T-cell (primary cell): ENCODE measurements at regions of chr19 and their contacts with region 1.

Region 1: DNA sequence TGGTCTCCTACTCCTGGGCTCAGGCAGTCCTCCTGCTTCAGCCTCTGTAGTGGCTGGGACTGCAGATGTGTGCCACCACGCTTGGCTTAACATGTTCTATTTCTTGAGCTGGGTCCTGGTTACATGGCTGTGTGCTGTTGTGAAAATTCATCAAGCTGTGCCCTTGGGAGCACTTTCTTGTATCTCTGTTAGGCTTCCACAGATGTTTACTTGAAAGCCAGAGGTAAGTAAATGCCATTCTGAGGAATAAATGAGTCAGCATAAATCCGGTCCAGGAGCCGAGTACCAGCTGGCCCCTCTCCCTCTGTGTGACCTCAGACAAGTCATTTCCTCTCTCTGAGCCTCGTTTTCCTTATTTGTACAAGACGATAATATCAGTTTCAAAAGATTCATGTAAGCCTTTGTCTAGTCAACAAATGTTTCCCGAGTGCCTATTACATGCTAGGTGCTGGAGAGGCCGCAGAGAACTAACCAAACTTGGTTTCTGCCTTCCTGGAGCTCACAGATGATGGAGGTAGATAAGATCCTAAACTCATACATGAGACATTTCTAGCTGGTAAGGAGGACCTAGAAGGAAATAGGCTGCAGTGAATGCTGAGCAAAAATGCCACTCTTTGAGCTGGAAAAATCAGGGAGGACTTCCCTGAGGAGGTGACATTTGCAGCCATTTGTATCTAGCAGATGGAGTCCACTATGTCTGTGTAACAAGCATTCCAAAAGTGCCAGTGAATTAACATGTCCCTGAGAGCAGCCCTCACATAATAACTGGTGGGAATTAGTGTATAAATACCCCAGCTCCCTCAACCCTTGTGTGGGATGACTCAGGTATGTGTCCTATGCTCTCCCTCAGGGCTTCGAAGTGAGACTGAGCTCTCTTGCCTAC is 2.7 kb upstream of the RASAL3 start:
- DNase-seq: peak in 15 of 35 experiments; percentile 10 to 69 (median 26)
- ATAC-seq: peak; percentile 24 to 47 (median 38)
- H3K4me3 ChIP-seq: no peak overlapping the region
- H3K4me3 Mint-ChIP-seq: peak overlapping the region; percentile 60 to 89 (median 69)
- H3K27ac ChIP-seq: peak overlapping the region; percentile 76
- H3K27ac Mint-ChIP-seq: peak overlapping the region; percentile 87 to 96
- H3K4me1 ChIP-seq: peaks cover 23 to 73% of the 10 kb centered on the region in 2 experiments
- H3K4me1 Mint-ChIP-seq: peaks cover 62 to 68% (median 64%) of the 10 kb centered on the region in 3 donors
- H3K27me3 ChIP-seq: no peaks in the 10 kb centered on the region
- H3K27me3 Mint-ChIP-seq: peaks cover 0 to 3% of the 10 kb centered on the region in 2 donors

Region 2: GRCh38 chr19:15453091-15453578 is 14.0 kb before region 1 on chr19:
- CTCF ChIA-PET with region 1: interaction called, 3 read pairs
- POLR2A ChIA-PET with region 1: interaction called in 1 of 2 experiments, 10 read pairs
- DNase-seq: no peak
- ATAC-seq: no peak
- H3K4me3 ChIP-seq: no peak overlapping the region
- H3K4me3 Mint-ChIP-seq: no peak overlapping the region
- H3K27ac ChIP-seq: no peak overlapping the region
- H3K27ac Mint-ChIP-seq: no peak overlapping the region
- H3K4me1 ChIP-seq: peaks cover 0 to 54% of the 10 kb centered on the region in 2 experiments
- H3K4me1 Mint-ChIP-seq: peaks cover 33 to 43% (median 38%) of the 10 kb centered on the region in 3 donors
- H3K27me3 ChIP-seq: peaks cover 0 to 2% of the 10 kb centered on the region in 2 experiments
- H3K27me3 Mint-ChIP-seq: no peaks in the 10 kb centered on the region

Region 3: DNA sequence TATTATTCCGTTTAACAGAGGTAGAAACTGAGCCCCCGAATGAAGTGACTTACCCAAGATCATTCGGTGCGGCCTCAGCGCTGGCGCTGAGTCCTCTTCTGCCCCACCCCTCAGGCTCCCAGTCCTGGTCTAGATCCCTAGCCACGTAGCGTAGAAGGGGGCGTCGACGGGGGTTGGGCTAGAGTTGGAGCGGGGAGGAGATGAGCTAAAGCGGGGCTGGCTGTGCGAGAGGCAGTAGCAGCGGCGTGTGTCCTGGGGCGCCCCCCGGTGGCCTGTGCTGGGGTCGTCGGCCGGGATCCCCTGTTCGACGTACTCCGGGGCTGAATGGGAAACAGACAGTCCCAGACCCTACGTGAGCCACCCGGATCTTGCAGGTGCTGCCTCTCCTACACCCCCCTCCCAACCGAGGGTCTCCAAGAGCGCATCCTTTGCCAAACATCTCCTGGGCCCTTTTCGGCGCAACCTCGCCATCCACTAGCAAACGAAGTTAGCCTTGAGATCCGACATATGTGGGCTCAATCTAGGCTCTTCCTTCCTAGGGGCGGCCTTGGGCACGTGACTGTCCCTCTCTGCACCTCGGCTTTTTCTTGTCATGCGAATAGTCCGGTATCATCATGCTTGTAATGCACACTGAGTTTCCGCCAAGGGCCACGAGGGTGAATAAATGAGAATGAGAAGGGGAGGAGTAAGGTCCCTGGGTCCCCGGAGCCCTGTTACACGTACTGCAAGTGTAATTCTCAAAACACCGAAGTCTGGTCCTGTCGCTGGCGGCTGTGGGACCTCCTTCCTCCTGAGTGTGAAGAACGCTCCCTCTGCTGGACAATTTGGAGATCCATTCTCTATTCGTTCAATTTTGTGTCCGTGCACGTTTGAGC is 88.9 kb after region 1 on chr19:
- CTCF ChIA-PET with region 1: interaction called, 4 to 7 read pairs
- POLR2A ChIA-PET with region 1: interaction called, 9 to 11 read pairs
- DNase-seq: peak; percentile 87 to 99 (median 94)
- ATAC-seq: peak; percentile 81 to 89 (median 86)
- H3K4me3 ChIP-seq: peak overlapping the region; percentile 52 to 82
- H3K4me3 Mint-ChIP-seq: peak overlapping the region; percentile 66 to 81 (median 75)
- H3K27ac ChIP-seq: peak overlapping the region; percentile 65
- H3K27ac Mint-ChIP-seq: peak overlapping the region; percentile 88 to 89
- H3K4me1 ChIP-seq: peaks cover 7 to 33% of the 10 kb centered on the region in 2 experiments
- H3K4me1 Mint-ChIP-seq: peaks cover 23 to 30% (median 28%) of the 10 kb centered on the region in 3 donors
- H3K27me3 ChIP-seq: peaks cover 0 to 14% of the 10 kb centered on the region in 2 experiments
- H3K27me3 Mint-ChIP-seq: no peaks in the 10 kb centered on the region

Region 4: GRCh38 chr19:16659831-16660708 is 1193.0 kb after region 1 on chr19 and contains the start of gene SMIM7:
- CTCF ChIA-PET with region 1: no interaction called
- POLR2A ChIA-PET with region 1: no interaction called
- DNase-seq: peak; percentile 95 to 99 (median 98)
- ATAC-seq: peak; percentile 96 to 98 (median 97)
- H3K4me3 ChIP-seq: peak within 1 kb of the TSS; percentile 91 to 98
- H3K4me3 Mint-ChIP-seq: peak within 1 kb of the TSS; percentile 93 to 98 (median 93)
- H3K27ac ChIP-seq: peak within 1 kb of the TSS; percentile 74
- H3K27ac Mint-ChIP-seq: peak within 1 kb of the TSS; percentile 94 to 100
- H3K4me1 ChIP-seq: peaks cover 7 to 48% of the 10 kb centered on the region in 2 experiments
- H3K4me1 Mint-ChIP-seq: peaks cover 28 to 52% (median 44%) of the 10 kb centered on the region in 3 donors
- H3K27me3 ChIP-seq: peaks cover 0 to 7% of the 10 kb centered on the region in 2 experiments
- H3K27me3 Mint-ChIP-seq: no peaks in the 10 kb centered on the region
- total RNA-seq, gene SMIM7: 56.7 to 77.6 (median 73.1) TPM

Region 5: GRCh38 chr19:17058236-17058635 is 1591.1 kb after region 1 on chr19:
- CTCF ChIA-PET with region 1: no interaction called
- POLR2A ChIA-PET with region 1: interaction called in 1 of 2 experiments, 13 read pairs
- DNase-seq: no peak
- ATAC-seq: no peak
- H3K4me3 ChIP-seq: no peak overlapping the region
- H3K4me3 Mint-ChIP-seq: no peak overlapping the region
- H3K27ac ChIP-seq: no peak overlapping the region
- H3K27ac Mint-ChIP-seq: no peak overlapping the region
- H3K4me1 ChIP-seq: no peaks in the 10 kb centered on the region
- H3K4me1 Mint-ChIP-seq: peaks cover 0 to 5% (median 0%) of the 10 kb centered on the region in 3 donors
- H3K27me3 ChIP-seq: no peaks in the 10 kb centered on the region
- H3K27me3 Mint-ChIP-seq: no peaks in the 10 kb centered on the region